ENCODE measurements at regions of chr9 and their contacts with region 1.

Region 1: GRCh38 chr9:19102631-19103345 is at the start of gene HAUS6:
- DNase-seq: peak; percentile 96
- ATAC-seq: peak; percentile 99
- H3K4me3 ChIP-seq: peak within 1 kb of the TSS; percentile 62
- H3K27ac ChIP-seq: peak within 1 kb of the TSS; percentile 59
- H3K4me1 ChIP-seq: peaks cover 4% of the 10 kb centered on the region; the same call in 1 of the 2 replicates
- H3K27me3 ChIP-seq: no peaks in the 10 kb centered on the region
- CTCF ChIP-seq: peak; percentile 45
- POLR2A ChIP-seq: peak; percentile 56; the same call in 1 of the 2 replicates
- RAD21 ChIP-seq: peak; percentile 20; the same call in 1 of the 2 replicates
- total RNA-seq, gene HAUS6: 13.3 and 21.4 TPM in 2 replicates

Region 2: GRCh38 chr9:19057033-19057432 is 45.8 kb before region 1 on chr9:
- CTCF ChIA-PET with region 1: no interaction called
- POLR2A ChIA-PET with region 1: no interaction called
- dilution Hi-C with region 1: no loop called
- in situ Hi-C with region 1: no loop called
- intact Hi-C with region 1: loop called (anchors 5 kb)
- DNase-seq: no peak
- ATAC-seq: no peak
- H3K4me3 ChIP-seq: no peak overlapping the region
- H3K27ac ChIP-seq: no peak overlapping the region
- H3K4me1 ChIP-seq: no peaks in the 10 kb centered on the region
- H3K27me3 ChIP-seq: no peaks in the 10 kb centered on the region
- CTCF ChIP-seq: no peak
- POLR2A ChIP-seq: no peak
- RAD21 ChIP-seq: no peak

Region 3: DNA sequence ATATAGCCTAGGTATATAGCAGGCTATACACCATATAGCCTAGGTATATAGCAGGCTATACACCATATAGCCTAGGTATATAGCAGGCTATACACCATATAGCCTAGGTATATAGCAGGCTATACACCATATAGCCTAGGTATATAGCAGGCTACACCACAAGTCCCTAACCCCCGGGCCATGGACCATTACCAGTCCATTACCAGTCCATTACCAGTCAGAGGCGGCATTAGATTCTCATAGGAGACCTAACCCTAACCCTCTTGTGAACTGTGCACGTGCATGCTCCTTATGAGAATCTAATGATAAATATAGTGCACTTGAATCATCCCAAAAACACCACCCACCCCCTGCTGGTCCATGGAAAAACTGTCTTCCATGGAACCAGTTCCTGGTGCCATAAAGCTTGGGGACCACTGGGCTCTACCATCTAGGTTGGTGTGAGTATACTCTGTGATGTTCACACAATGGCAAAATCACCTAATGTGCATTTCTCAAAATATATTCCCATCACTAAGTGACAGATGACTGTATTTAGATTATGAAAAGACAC is 19.8 kb after region 1 on chr9:
- CTCF ChIA-PET with region 1: no interaction called
- POLR2A ChIA-PET with region 1: no interaction called
- dilution Hi-C with region 1: no loop called
- in situ Hi-C with region 1: no loop called
- intact Hi-C with region 1: no loop called
- DNase-seq: no peak
- ATAC-seq: no peak
- H3K4me3 ChIP-seq: no peak overlapping the region
- H3K27ac ChIP-seq: no peak overlapping the region
- H3K4me1 ChIP-seq: peaks cover 10% of the 10 kb centered on the region; the same call in 1 of the 2 replicates
- H3K27me3 ChIP-seq: no peaks in the 10 kb centered on the region
- CTCF ChIP-seq: no peak
- POLR2A ChIP-seq: no peak
- RAD21 ChIP-seq: no peak

Region 4: GRCh38 chr9:19320495-19320894 is 217.7 kb after region 1 on chr9:
- CTCF ChIA-PET with region 1: no interaction called
- POLR2A ChIA-PET with region 1: no interaction called
- dilution Hi-C with region 1: no loop called
- in situ Hi-C with region 1: no loop called
- intact Hi-C with region 1: loop called (anchors 10 kb)
- DNase-seq: no peak
- ATAC-seq: no peak
- H3K4me3 ChIP-seq: no peak overlapping the region
- H3K27ac ChIP-seq: no peak overlapping the region
- H3K4me1 ChIP-seq: no peaks in the 10 kb centered on the region
- H3K27me3 ChIP-seq: no peaks in the 10 kb centered on the region
- CTCF ChIP-seq: no peak
- POLR2A ChIP-seq: no peak
- RAD21 ChIP-seq: no peak